ENCODE measurements at regions of chr1 and their contacts with region 1.

Region 1: GRCh38 chr1:42035830-42036604 is 117.2 kb upstream of the GUCA2B start:
- DNase-seq: peak; percentile 96
- H3K4me3 Mint-ChIP-seq: peak overlapping the region; percentile 80
- H3K27ac Mint-ChIP-seq: no peak overlapping the region
- H3K4me1 Mint-ChIP-seq: peaks cover 40% of the 10 kb centered on the region
- H3K27me3 Mint-ChIP-seq: peaks cover 14% of the 10 kb centered on the region

Region 2: DNA sequence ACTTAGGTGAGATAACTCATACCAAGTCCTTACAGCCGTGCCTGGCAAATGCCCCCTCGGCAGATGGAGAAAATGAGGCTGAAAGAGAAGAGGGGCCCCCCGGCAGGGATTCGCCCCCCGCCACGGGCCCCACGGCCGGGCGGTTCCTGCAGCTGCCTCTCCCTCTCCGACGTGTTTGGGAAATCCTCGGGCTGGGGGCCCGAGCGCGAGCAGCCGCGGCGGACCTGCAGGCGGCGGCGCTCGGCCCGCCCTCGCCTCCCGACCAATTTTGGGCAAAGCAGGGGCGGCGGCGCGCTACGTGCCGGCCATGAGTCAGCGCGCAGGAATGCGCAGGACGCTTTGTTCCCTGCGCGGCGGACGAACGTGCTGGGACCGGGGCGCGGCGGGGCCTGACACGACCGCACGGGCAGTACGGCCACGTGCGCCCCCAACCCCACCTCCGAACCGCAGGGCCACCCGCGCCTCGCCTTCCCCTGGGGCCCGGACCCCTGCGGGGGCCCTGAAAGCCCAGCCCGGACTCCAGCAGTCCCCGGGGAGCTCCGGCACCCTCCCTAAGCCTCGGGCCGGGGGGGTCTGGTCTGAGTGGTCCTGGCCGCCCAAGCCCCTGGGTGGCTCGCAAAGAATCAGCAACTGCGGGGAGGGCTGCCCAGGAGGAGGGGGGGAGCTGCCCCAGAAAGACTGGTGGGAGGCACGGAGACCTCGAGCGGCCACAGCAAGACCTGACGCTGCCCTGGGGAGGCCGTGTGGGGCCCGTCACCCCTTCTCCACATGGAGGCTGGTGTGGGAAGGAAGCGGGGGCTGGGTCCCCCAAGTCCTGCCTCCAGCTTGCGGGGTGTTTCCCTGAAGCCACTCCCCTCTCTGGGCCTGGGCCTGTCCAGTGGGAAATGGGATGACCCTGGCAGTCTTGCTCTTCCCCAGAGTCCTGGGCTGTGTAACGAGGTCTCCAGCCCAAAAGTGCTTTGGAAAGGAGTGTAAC is 539.6 kb before region 1 on chr1:
- intact Hi-C with region 1: loop called (anchors 10 kb)
- DNase-seq: peak; percentile 33
- H3K4me3 Mint-ChIP-seq: peak overlapping the region; percentile 54
- H3K27ac Mint-ChIP-seq: no peak overlapping the region
- H3K4me1 Mint-ChIP-seq: peaks cover 12% of the 10 kb centered on the region
- H3K27me3 Mint-ChIP-seq: peaks cover 7% of the 10 kb centered on the region

Region 3: GRCh38 chr1:41751804-41752513 is 284.1 kb before region 1 on chr1:
- intact Hi-C with region 1: loop called (anchors 5 kb)
- DNase-seq: no peak
- H3K4me3 Mint-ChIP-seq: peak overlapping the region; percentile 48
- H3K27ac Mint-ChIP-seq: peak overlapping the region; percentile 81
- H3K4me1 Mint-ChIP-seq: peaks cover 90% of the 10 kb centered on the region
- H3K27me3 Mint-ChIP-seq: no peaks in the 10 kb centered on the region

Region 4: DNA sequence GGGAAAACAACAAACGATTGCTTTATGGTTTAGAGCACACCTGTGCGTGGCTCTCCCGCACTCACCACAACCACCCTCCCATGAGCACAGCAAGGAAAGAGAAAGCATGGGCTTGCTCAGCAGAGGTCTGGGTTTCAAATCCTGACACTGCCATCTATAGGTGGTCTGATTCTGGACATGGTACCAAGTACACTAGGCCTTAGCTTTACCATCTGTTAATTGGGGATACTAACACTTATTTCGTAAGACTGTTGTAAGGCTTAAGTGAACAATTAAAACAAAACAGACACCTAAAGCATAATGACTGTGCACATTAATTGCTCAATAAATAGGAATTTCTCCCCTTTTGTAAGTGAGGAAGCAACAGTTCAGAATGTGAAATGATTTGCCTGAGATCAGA is 167.4 kb before region 1 on chr1:
- intact Hi-C with region 1: loop called (anchors 5 kb)
- DNase-seq: peak; percentile 44
- H3K4me3 Mint-ChIP-seq: no peak overlapping the region
- H3K27ac Mint-ChIP-seq: peak overlapping the region; percentile 54
- H3K4me1 Mint-ChIP-seq: peaks cover 26% of the 10 kb centered on the region
- H3K27me3 Mint-ChIP-seq: no peaks in the 10 kb centered on the region

Region 5: DNA sequence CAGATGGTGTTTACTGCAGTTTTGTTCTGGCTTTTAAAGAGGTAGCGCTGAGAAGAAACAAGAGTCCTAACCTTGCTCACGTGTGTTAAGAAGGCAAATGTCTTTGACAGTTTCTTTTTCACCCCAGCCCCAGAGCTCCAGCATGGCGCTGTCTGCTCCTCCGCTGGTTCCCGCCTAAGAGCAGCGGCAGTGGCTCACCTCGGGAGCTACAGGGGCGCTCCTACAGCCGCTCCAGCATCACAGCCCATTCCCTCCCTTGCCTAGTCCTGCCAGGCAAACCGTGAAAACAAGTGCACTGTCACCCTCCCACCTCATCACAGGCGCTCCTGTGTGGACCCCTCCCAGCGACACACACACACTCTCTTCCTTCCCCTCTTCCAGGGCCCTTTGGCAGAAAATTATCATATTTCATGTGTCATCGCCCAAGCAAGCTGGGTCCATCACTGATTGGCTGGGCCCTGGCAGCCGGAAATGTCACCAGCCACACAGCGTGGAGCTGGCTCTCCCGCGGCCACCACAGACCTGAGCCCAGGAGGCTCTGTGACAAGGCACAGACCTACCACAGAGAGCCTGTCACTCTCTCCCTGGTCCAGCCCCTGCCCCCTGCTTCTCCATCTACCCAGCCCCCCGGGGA is 116.1 kb before region 1 on chr1:
- intact Hi-C with region 1: loop called (anchors 1 kb)
- DNase-seq: peak; percentile 83
- H3K4me3 Mint-ChIP-seq: peak overlapping the region; percentile 86
- H3K27ac Mint-ChIP-seq: peak overlapping the region; percentile 95
- H3K4me1 Mint-ChIP-seq: peaks cover 59% of the 10 kb centered on the region
- H3K27me3 Mint-ChIP-seq: peaks cover 4% of the 10 kb centered on the region

Region 6: GRCh38 chr1:41983451-41983850 is 52.6 kb before region 1 on chr1:
- intact Hi-C with region 1: no loop called
- DNase-seq: no peak
- H3K4me3 Mint-ChIP-seq: no peak overlapping the region
- H3K27ac Mint-ChIP-seq: no peak overlapping the region
- H3K4me1 Mint-ChIP-seq: peaks cover 33% of the 10 kb centered on the region
- H3K27me3 Mint-ChIP-seq: no peaks in the 10 kb centered on the region

Region 7: GRCh38 chr1:42311138-42311537 is 275.1 kb after region 1 on chr1:
- intact Hi-C with region 1: no loop called
- DNase-seq: no peak
- H3K4me3 Mint-ChIP-seq: no peak overlapping the region
- H3K27ac Mint-ChIP-seq: no peak overlapping the region
- H3K4me1 Mint-ChIP-seq: peaks cover 61% of the 10 kb centered on the region
- H3K27me3 Mint-ChIP-seq: no peaks in the 10 kb centered on the region

Measured in activated T-helper 1 cell treated with anti-CD3 and anti-CD28 coated beads, Interleukin-12 subunit alpha, Interleukin-12 subunit beta, Interleukin-2, Interleukin-4 antibody, amounts not matched to agents 30 ng/mL and 10 ng/mL and 1 ng/mL, durations not matched to agents 14 hours and 24 hours and 36 hours (primary cell).